Naive thymus-derived CD4-positive, alpha-beta T cell (primary cell): ENCODE measurements at regions of chr10 and their contacts with region 1.

Region 1: DNA sequence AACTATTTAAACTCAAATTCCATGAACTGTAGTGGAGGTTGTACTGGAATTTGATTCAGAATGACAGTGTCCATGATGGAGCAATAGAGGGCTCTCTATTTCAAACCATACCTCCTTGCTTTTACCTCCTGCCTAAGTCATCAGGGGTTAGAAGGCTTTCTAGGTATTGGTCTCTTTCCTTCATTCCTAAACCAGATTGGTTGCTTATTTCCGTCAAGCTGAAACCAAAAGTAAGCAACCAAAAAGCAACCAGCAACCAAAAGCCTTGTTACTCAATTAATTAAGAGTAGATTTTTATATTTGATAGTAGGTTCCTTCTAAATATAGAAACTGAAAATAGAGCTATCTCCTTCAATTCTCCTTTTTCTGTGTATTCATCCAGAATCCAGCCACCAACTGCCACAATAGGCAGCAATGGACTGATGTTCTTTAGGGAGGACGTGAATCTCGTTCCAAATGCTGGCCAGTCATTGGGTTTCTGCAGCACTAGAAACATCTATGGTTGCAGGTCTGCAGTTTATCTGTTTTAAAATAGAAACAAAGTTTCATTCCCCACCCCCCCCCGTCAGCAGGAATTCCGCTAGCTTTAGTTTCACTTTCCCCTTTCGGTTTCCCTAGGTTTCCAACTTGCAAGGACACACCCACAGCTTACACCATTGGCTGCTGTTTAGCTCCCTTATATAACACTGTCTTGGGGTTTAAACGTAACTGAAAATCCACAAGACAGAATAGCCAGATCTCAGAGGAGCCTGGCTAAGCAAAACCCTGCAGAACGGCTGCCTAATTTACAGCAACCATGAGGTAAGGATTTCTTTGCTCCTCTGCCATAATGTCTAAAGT is at the start of gene IFIT1:
- DNase-seq: peak in 8 of 9 donors; percentile 36 to 84 (median 72)
- ATAC-seq: peak; percentile 96
- H3K4me3 ChIP-seq: peak within 1 kb of the TSS; percentile 82
- H3K4me3 Mint-ChIP-seq: peak within 1 kb of the TSS; percentile 85 to 96 (median 90)
- H3K27ac ChIP-seq: peak within 1 kb of the TSS; percentile 72
- H3K27ac Mint-ChIP-seq: peak within 1 kb of the TSS; percentile 87 to 97 (median 93)
- H3K4me1 ChIP-seq: peaks cover 14 to 19% of the 10 kb centered on the region in 2 donors
- H3K4me1 Mint-ChIP-seq: peaks cover 14 to 53% (median 45%) of the 10 kb centered on the region in 7 donors
- H3K27me3 ChIP-seq: no peaks in the 10 kb centered on the region
- H3K27me3 Mint-ChIP-seq: peaks cover 0 to 6% (median 0%) of the 10 kb centered on the region in 5 donors
- total RNA-seq, gene IFIT1: 1.7 to 15.7 (median 6.5) TPM

Region 2: DNA sequence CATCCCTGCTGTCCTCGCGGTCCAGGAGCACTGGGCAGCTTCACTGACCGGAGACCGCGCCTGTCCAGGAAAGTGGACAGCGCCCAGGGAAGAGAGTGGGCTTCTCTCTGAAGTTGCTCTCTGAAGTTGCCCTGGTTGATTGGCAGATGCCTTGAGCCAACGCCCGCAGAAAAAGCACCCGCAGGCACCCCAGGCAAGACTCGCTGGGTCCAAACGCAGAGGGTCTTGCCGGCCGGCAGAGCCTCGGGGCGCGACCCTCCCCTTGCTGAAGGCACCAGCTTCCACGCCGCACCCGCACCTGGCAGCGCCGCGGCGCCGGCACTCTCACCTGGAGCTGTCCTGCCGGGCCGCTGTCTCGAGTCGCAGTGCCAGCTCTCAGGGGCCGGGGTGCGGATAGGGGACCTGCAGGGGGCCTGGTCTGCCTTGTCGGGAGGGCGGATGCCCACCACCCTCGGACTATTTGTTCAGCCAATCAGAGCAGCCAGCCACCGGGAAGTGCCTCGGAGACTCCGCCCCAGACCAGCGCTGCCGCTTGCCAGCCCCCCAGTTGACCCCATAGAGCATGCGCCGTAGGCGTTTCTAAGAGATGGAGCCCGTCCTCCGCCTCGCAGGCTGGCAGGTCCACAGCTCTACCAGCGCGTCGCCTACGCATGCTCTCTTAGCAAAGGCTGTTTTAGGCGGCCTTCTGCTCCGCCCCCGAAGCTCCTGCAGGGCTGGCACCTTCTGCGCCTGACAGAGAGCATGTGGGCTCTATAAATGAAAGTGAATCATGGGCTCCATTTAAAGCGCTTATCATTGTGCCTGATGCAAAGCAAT is 140.5 kb before region 1 on chr10 and contains the start of gene LIPA:
- CTCF ChIA-PET with region 1: interaction called, 3 read pairs
- POLR2A ChIA-PET with region 1: interaction called, 11 read pairs
- intact Hi-C with region 1: loop called in 1 of 2 experiments (anchors 2 kb)
- DNase-seq: peak; percentile 78 to 97 (median 94)
- ATAC-seq: peak; percentile 97
- H3K4me3 ChIP-seq: peak within 1 kb of the TSS; percentile 80
- H3K4me3 Mint-ChIP-seq: peak within 1 kb of the TSS; percentile 82 to 91 (median 90)
- H3K27ac ChIP-seq: peak within 1 kb of the TSS; percentile 76
- H3K27ac Mint-ChIP-seq: peak within 1 kb of the TSS; percentile 38 to 90 (median 84)
- H3K4me1 ChIP-seq: peaks cover 8 to 9% of the 10 kb centered on the region in 2 donors
- H3K4me1 Mint-ChIP-seq: peaks cover 17 to 32% (median 22%) of the 10 kb centered on the region in 7 donors
- H3K27me3 ChIP-seq: no peaks in the 10 kb centered on the region
- H3K27me3 Mint-ChIP-seq: peaks cover 0 to 9% (median 0%) of the 10 kb centered on the region in 5 donors
- total RNA-seq, gene LIPA: 19.9 to 49.9 (median 48.3) TPM

Region 3: GRCh38 chr10:89301721-89302445 is 90.3 kb before region 1 on chr10 and contains the start of gene IFIT2:
- CTCF ChIA-PET with region 1: interaction called, 4 read pairs
- POLR2A ChIA-PET with region 1: interaction called, 27 read pairs
- intact Hi-C with region 1: loop called (anchors 1 to 2 kb)
- DNase-seq: peak in 7 of 9 donors; percentile 50 to 72 (median 60)
- ATAC-seq: peak; percentile 86
- H3K4me3 ChIP-seq: peak within 1 kb of the TSS; percentile 76
- H3K4me3 Mint-ChIP-seq: peak within 1 kb of the TSS; percentile 83 to 99 (median 94)
- H3K27ac ChIP-seq: peak within 1 kb of the TSS; percentile 71
- H3K27ac Mint-ChIP-seq: peak within 1 kb of the TSS; percentile 88 to 98 (median 97)
- H3K4me1 ChIP-seq: peaks cover 15 to 24% of the 10 kb centered on the region in 2 donors
- H3K4me1 Mint-ChIP-seq: peaks cover 24 to 60% (median 44%) of the 10 kb centered on the region in 7 donors
- H3K27me3 ChIP-seq: no peaks in the 10 kb centered on the region
- H3K27me3 Mint-ChIP-seq: peaks cover 0 to 25% (median 0%) of the 10 kb centered on the region in 5 donors
- total RNA-seq, gene IFIT2: 6.0 to 16.4 (median 8.4) TPM

Region 4: GRCh38 chr10:89369156-89370105 is 22.7 kb before region 1 on chr10:
- CTCF ChIA-PET with region 1: interaction called, 8 read pairs
- POLR2A ChIA-PET with region 1: interaction called, 5 read pairs
- intact Hi-C with region 1: loop called in 1 of 2 experiments (anchors 2 kb)
- DNase-seq: peak in 6 of 9 donors; percentile 12 to 40 (median 24)
- ATAC-seq: peak; percentile 62
- H3K4me3 ChIP-seq: no peak overlapping the region
- H3K4me3 Mint-ChIP-seq: no peak overlapping the region
- H3K27ac ChIP-seq: no peak overlapping the region
- H3K27ac Mint-ChIP-seq: no peak overlapping the region
- H3K4me1 ChIP-seq: peaks cover 0 to 7% of the 10 kb centered on the region in 2 donors
- H3K4me1 Mint-ChIP-seq: peaks cover 0 to 18% (median 14%) of the 10 kb centered on the region in 7 donors
- H3K27me3 ChIP-seq: no peaks in the 10 kb centered on the region
- H3K27me3 Mint-ChIP-seq: peaks cover 0 to 37% (median 0%) of the 10 kb centered on the region in 5 donors

Region 5: DNA sequence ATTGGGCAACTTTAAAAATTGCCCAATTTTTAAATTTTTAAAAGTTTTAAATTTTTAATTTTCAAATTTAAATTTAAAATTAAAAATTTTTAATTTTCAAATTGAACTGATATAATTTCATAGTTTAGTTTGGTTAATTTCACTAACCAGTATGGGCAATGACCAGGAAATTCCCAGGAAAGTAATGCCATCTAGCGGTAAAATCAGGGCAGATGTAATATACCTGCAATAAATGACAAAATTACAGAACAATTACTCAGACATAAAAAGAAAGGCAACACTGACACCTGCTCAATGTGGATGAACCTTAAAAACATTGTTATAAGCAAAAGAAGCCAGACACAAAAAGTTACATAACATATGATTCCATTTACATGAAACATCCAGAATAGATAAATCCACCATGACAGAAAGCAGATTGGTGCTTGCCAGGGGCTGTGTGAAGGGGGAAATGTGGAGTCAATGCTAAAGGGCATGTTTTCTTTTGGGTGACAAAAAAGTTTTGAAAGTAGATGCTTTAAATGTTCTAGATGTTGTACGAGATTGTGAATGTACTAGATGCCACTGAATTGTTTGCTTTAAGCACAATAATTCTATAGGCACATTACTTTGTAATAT is 171.8 kb after region 1 on chr10:
- CTCF ChIA-PET with region 1: interaction called, 4 read pairs
- POLR2A ChIA-PET with region 1: no interaction called
- intact Hi-C with region 1: loop called in 1 of 2 experiments (anchors 1 kb)
- DNase-seq: peak in 7 of 9 donors; percentile 13 to 58 (median 48)
- ATAC-seq: peak; percentile 65
- H3K4me3 ChIP-seq: no peak overlapping the region
- H3K4me3 Mint-ChIP-seq: no peak overlapping the region
- H3K27ac ChIP-seq: no peak overlapping the region
- H3K27ac Mint-ChIP-seq: no peak overlapping the region
- H3K4me1 ChIP-seq: no peaks in the 10 kb centered on the region
- H3K4me1 Mint-ChIP-seq: no peaks in the 10 kb centered on the region
- H3K27me3 ChIP-seq: no peaks in the 10 kb centered on the region
- H3K27me3 Mint-ChIP-seq: peaks cover 4 to 44% (median 14%) of the 10 kb centered on the region in 5 donors